Activated T-helper 2 cell treated with anti-CD3 and anti-CD28 coated beads, Interferon-gamma antibody, Interleukin-2, Interleukin-4, amounts not matched to agents 10 μg/mL and 5 μg/mL and 100 μg/mL, durations not matched to agents 14 hours and 24 hours and 36 hours (primary cell): ENCODE measurements at regions of chr10 and their contacts with region 1.

Region 1: DNA sequence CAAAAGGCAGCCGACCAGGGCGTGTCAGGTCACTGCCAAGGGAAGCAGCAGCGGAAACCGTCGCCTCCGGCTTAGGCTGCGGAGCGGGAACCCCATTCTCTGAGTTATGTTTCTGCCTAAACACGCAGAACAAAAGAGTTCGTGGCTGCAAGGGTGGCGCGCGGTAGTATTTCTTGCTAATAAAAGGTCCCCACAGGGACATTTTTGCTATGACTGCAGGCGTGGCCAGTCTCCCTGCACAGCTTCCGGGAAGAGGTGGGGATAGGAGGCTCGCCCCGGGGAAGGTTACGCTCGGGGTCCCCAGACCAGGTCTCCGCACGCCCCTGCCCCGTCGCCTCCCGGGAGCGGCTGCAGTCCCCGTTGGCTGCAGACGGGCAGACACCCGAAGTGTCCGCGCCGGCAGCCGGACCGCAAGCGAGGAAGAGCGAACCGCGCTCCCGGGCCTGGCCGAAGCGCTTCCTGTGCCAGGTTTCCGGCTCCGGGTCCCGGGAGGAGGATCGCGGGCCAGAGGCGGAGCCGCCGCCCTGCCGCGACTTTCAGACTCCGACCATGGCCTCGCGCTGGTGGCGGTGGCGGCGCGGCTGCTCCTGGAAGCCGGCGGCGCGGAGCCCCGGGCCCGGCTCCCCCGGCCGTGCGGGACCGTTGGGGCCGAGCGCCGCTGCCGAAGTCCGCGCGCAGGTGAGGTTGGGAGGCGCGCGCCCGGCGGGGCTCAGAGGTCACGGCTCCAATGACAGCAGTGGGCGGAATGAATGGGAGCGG is at the start of gene PDSS1:
- DNase-seq: peak; percentile 64
- H3K4me3 Mint-ChIP-seq: peak within 1 kb of the TSS; percentile 99
- H3K27ac Mint-ChIP-seq: peak within 1 kb of the TSS; percentile 92
- H3K4me1 Mint-ChIP-seq: peaks cover 30% of the 10 kb centered on the region
- H3K27me3 Mint-ChIP-seq: no peaks in the 10 kb centered on the region
- total RNA-seq, gene PDSS1: 27.9 and 32.3 TPM in 2 replicates

Region 2: DNA sequence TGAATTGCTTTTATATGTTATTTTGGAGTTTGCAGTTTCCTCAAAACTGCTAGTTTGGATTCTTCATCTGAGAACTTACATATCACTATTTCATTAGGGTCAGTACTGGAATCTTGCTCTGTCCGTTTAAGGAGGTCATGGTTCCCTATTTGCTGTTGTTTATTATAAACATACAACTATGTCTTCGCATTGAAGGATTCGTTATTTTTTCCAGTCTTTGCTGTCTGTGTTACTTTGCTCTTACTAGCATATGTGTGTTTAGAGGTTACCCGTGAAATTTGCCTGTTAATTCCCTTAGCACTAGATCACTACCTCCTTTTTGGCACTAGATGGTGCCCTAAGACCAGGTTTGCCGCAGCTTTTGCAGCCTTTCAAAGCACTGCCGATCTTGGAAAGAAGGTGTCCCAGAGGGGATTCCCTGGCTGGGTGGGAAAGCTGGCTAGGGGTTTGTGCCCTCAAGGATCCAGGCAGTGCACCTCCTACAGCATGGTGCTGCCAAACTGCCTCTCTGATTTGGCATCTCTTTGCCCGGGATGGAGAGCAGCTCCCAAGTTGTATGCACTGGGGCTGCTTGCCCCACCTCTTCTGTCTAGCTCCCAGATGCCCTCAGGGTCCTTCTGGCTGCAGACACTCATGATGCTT is 362.3 kb before region 1 on chr10:
- intact Hi-C with region 1: loop called (anchors 10 kb)
- DNase-seq: peak; percentile 51
- H3K4me3 Mint-ChIP-seq: peak overlapping the region; percentile 71
- H3K27ac Mint-ChIP-seq: peak overlapping the region; percentile 64
- H3K4me1 Mint-ChIP-seq: peaks cover 7% of the 10 kb centered on the region
- H3K27me3 Mint-ChIP-seq: peaks cover 6% of the 10 kb centered on the region

Region 3: GRCh38 chr10:26437637-26438461 is 259.5 kb before region 1 on chr10 and contains the start of gene APBB1IP:
- intact Hi-C with region 1: loop called (anchors 10 kb)
- DNase-seq: peak; percentile 52
- H3K4me3 Mint-ChIP-seq: peak within 1 kb of the TSS; percentile 92
- H3K27ac Mint-ChIP-seq: peak within 1 kb of the TSS; percentile 90
- H3K4me1 Mint-ChIP-seq: peaks cover 39% of the 10 kb centered on the region
- H3K27me3 Mint-ChIP-seq: no peaks in the 10 kb centered on the region
- total RNA-seq, gene APBB1IP: 45.2 and 47.4 TPM in 2 replicates

Region 4: DNA sequence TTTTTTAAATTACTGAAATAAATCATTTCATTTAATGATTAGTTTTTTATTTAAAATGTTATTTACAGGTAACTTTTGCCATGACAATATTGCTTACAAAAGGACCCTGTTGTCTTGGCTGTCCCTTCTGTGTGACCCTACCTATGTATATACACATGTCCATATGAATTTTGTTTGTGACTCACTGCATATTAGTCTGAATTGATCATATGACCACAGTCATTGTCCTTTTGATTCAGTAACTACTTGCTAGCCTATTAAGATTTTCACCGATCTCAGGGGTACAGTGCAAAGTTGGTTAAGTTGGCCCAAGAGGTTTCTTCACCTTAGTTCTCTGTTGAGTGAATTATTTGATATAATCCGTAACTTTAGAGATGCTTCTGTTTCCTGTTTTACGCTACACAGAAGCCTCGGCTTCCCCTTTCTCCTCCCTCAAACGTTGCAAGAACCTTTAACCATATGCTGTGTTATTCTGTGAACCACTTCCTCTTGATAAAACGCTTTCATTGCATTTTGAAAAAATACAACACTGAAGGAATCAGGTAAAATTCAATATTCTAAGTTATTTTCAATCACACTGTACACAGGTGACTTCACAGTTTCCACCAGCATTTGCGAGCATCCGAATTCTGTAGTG is 215.3 kb before region 1 on chr10:
- intact Hi-C with region 1: loop called (anchors 5 kb)
- DNase-seq: peak; percentile 38
- H3K4me3 Mint-ChIP-seq: peak overlapping the region; percentile 71
- H3K27ac Mint-ChIP-seq: peak overlapping the region; percentile 98
- H3K4me1 Mint-ChIP-seq: peaks cover 70% of the 10 kb centered on the region
- H3K27me3 Mint-ChIP-seq: no peaks in the 10 kb centered on the region

Region 5: GRCh38 chr10:26737730-26738129 is 40.4 kb after region 1 on chr10:
- intact Hi-C with region 1: loop called (anchors 5 kb)
- DNase-seq: peak; percentile 26
- H3K4me3 Mint-ChIP-seq: no peak overlapping the region
- H3K27ac Mint-ChIP-seq: peak overlapping the region; percentile 96
- H3K4me1 Mint-ChIP-seq: peaks cover 49% of the 10 kb centered on the region
- H3K27me3 Mint-ChIP-seq: no peaks in the 10 kb centered on the region